HAP-1 (cell line): ENCODE measurements at regions of chr17 and their contacts with region 1.

Region 1: GRCh38 chr17:79393358-79394202 is 217.3 kb downstream of the RBFOX3 start:
- DNase-seq: peak; percentile 42 to 88
- H3K4me3 ChIP-seq: no peak overlapping the region
- H3K4me1 ChIP-seq: no peaks in the 10 kb centered on the region
- H3K27me3 ChIP-seq: peaks cover 35% of the 10 kb centered on the region

Region 2: DNA sequence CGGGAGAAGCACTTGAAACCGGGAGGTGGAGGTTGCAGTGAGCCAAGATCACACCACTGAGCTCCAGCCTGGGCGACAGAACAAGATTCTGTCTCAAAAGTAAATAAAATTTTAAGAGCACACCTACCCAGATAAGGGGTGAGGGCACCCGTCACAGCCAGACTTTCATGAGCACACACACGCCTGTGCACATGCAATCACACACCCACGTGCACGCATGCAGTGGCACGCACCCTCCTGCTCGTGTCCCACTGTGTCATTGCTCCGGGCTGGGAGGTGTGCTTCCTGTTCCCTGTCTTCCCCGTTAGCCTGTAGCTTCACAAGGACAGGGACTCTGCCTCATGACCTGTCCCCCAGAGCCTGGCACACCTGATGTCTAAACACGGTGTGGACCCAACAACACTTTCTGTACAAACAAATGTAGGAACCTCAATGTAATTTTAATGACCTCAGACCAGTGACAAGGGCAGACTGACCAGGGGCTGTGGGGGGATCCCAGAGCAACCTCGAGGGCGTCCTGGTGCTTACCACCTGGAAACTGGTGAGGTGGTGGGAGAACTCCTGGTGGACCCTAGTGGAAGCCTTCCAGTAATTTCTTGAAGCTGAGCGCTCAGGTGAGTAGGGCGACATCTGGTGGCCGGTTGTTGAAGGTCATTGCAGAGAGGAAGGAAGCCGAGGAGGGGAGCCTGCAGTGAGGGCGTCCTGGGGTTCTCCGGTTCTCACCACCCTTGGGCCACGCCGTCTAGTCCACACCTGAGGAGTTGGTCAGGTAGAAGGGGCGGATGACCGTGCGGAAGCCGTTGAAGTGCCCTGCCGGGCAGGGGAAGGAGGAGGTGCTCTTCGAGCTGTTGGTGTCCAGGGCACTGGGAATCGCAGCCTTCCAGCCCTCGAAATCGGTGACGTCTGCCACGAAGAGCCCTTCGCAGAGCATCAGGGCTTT is 422.5 kb before region 1 on chr17:
- in situ Hi-C with region 1: no loop called
- DNase-seq: peak; percentile 69 to 88
- H3K4me3 ChIP-seq: no peak overlapping the region
- H3K4me1 ChIP-seq: peaks cover 13% of the 10 kb centered on the region
- H3K27me3 ChIP-seq: no peaks in the 10 kb centered on the region

Region 3: DNA sequence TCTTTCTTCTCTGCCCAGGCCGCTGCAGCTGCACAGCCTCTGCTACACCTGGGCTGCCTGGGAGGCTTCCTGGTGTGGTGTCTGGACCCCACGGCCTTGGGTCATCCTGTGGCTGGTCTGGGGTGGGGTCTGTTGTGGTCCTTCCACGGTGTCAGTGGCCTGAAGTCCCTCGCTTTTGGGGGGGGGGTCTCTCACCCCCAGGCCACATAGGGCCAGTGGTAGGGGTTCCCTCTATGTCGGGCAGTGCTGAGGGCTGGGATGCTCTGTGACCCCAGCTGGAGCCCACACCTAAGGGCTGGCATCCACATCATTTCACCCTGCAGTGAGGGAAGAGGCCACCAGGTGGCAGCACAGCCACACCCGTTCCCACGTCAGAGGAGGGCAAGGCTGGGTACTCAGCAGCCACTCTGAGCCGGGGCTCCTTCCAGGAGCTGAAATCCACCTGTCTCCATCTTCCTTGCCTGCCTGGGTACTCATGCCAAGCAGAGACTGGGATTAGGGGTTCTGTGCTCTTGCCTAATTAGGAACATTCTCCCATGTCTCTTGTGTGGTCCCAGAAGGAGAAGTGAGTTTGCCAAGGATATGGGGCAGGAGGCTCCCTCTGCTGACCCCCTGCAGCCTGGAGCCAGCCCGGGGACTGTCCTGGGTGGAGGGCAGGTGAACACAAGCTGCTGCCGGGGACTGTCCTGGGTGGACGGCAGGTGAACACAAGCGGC is 306.0 kb before region 1 on chr17:
- in situ Hi-C with region 1: loop called (anchors 10 kb)
- DNase-seq: peak; percentile 34 to 84
- H3K4me3 ChIP-seq: no peak overlapping the region
- H3K4me1 ChIP-seq: no peaks in the 10 kb centered on the region
- H3K27me3 ChIP-seq: no peaks in the 10 kb centered on the region